Breast epithelium (tissue), 4 donors: ENCODE measurements at regions of chr10 and their contacts with region 1.

Region 1: GRCh38 chr10:119273413-119273812 is 66.0 kb downstream of the GRK5 start:
- DNase-seq: no peak
- H3K4me3 ChIP-seq: no peak overlapping the region
- H3K27ac ChIP-seq: peak overlapping the region in 1 of 2 donors; percentile 52
- H3K4me1 ChIP-seq: peaks cover 0 to 4% of the 10 kb centered on the region in 2 donors
- H3K27me3 ChIP-seq: no peaks in the 10 kb centered on the region
- CTCF ChIP-seq: no peak
- POLR2A ChIP-seq: no peak

Region 2: DNA sequence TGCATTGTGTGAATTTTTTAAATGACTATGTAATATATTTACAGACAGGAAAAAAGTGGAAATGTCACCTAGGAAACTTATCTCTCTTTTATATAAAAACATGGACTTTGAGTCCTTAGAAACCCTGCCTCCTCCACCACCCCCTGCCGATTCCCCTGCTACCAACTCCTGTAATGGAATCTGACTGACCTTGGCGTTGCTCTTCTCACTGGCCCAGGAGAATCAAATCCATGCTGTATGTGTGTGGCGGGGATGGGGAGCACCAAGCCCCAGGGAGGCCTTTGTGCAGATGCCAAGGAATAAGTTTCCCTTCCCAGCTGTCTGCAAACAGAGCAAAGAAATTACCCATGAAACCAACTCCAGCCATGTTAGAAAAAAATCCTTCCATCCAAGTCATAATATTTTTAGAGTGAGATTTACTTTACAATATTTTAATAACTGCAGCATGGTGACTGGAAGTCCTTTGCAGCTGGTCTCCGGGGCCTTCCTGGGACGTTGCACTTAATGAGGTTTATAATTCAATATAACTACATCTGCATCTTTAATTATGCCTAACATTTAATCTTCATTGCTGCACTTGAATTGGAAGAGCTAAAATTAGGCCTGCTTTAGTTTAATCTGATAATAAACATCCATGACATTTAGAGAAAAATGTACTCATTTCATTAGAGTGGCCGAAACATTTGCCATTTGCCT is 407.3 kb before region 1 on chr10:
- intact Hi-C with region 1: no loop called
- DNase-seq: no peak
- H3K4me3 ChIP-seq: no peak overlapping the region
- H3K27ac ChIP-seq: no peak overlapping the region
- H3K4me1 ChIP-seq: no peaks in the 10 kb centered on the region
- H3K27me3 ChIP-seq: no peaks in the 10 kb centered on the region
- CTCF ChIP-seq: no peak
- POLR2A ChIP-seq: no peak

Region 3: GRCh38 chr10:119237722-119238436 is 35.5 kb before region 1 on chr10:
- intact Hi-C with region 1: loop called (anchors 2 kb)
- DNase-seq: no peak
- H3K4me3 ChIP-seq: no peak overlapping the region
- H3K27ac ChIP-seq: peak overlapping the region in 1 of 2 donors; percentile 80
- H3K4me1 ChIP-seq: no peaks in the 10 kb centered on the region
- H3K27me3 ChIP-seq: no peaks in the 10 kb centered on the region
- CTCF ChIP-seq: no peak
- POLR2A ChIP-seq: no peak

Region 4: DNA sequence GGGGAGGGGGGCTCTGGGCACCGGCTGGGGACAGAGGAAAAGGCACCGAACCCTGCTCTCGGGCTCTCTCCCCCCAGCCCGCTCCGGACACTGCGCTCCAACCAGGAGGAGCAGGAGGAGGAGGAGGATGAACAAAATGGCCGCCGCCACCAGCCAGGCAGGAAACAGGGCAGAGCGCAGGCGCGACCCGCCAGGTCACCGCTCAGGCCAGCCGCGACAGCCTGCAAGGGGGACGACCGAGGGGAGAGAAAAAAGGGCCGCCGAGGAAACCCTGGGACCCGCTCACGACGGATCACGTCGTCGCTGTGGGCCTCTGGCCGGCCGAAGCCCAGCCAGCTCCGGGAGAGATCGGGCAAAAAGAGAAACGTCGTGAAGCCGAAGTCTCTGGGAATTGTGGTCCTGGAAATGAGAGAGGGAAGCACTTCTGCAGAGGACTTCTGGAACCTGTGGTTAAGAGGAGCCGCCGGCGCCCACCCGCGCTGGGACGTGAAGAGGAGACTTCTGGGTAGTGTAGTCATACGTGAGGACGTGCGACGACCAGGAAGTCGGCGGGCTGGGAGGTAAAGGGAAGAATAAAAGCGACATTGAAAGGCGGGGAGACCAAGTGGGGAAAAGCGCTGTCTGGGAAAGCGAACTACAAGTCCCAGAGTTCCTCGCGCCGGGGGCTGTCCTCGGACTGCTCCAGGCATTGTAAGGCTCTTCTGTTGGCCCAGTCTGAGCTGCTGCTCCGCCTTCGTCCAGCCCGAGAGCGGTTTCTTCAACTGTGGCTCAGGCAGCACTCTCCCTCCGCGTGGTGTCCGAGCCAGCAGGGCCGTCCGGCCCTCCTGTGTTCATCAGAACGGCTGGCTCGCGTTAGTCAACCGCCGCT is 323.4 kb after region 1 on chr10 and contains the start of gene TIAL1:
- intact Hi-C with region 1: no loop called
- DNase-seq: peak; percentile 96 to 98
- H3K4me3 ChIP-seq: peak within 1 kb of the TSS; percentile 82 to 96 (median 90)
- H3K27ac ChIP-seq: peak within 1 kb of the TSS; percentile 97 to 98
- H3K4me1 ChIP-seq: peaks cover 0 to 22% of the 10 kb centered on the region in 2 donors
- H3K27me3 ChIP-seq: no peaks in the 10 kb centered on the region
- CTCF ChIP-seq: no peak
- POLR2A ChIP-seq: peak; percentile 59
- total RNA-seq, gene TIAL1: 73.3 to 110 (median 76.4) TPM